ENCODE measurements at regions of chr11 and their contacts with region 1.

Region 1: GRCh38 chr11:117010808-117011540 is 87.3 kb downstream of the SIK3 start:
- DNase-seq: no peak
- H3K4me3 Mint-ChIP-seq: no peak overlapping the region
- H3K27ac Mint-ChIP-seq: peak overlapping the region; percentile 78
- H3K4me1 Mint-ChIP-seq: peaks cover 38% of the 10 kb centered on the region
- H3K27me3 Mint-ChIP-seq: no peaks in the 10 kb centered on the region

Region 2: DNA sequence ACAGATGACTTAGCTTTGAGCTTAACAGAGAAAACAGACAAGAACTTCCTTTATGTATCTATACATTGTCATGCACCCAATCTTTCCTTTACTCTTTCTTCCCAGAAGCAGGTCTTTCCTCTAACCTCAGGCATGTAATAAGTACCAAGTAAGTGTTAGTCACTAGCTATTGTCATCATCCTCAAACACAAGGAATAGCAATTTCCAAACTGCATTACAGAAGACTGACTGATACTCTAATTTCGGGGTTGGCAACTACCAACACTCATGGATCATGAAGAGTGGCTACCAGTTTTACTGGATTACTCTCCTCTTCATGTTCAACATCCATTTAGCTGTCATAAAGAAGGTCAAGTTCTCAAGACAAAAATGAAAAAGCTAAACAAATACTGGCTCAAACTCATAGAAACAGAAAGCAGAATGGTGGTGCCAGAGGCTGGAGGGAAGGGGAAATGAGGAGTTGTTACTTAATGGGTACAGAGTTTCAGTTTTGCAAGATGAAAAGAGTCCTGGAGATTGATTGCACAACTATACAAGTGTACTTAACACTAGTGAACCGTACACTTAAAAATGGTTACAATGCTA is 24.4 kb before region 1 on chr11:
- intact Hi-C with region 1: loop called (anchors 1 kb)
- DNase-seq: no peak
- H3K4me3 Mint-ChIP-seq: peak overlapping the region; percentile 65
- H3K27ac Mint-ChIP-seq: peak overlapping the region; percentile 73
- H3K4me1 Mint-ChIP-seq: peaks cover 70% of the 10 kb centered on the region
- H3K27me3 Mint-ChIP-seq: no peaks in the 10 kb centered on the region

Region 3: DNA sequence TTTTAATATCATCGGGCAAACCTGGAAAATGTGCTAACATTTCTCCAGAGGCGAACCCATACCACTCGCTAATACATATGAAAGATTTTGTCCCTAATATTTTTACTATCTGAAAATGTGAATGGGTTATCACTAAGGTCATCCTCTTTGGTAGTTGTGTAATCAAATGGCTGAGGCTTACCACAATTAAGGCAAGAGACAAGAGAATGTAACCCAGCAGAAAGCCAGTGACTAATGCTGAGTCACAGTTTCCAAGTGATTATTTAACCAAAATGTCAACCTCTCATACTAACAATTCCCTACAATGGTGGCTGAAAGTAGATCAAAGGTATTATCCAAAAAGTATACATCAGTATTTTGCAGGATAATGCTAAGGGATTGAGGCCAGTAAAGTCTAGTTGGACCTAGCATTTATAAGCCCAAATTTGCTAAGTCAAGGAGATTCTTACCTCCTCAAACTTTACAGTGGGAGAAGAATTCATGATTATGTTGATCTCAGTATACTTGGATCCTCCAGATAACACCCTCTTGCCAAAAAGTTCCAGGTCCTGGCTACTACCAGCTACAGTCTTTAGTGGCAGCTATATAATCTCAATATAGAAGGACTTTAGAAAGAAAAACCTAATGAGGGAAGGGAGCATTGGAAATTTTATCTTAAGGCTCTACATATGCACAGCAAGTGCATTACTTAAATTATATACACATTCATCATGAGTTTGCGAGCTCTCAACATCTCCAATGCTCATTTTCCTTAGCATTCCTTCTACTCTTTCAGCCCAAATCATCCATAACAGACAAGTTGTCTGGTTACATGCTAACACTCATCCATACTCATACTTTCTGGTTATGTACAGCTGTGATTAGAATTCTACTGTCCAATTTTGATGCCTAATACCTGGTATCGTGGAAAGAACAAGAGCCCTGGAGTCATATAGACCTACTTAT is 61.8 kb after region 1 on chr11:
- intact Hi-C with region 1: loop called (anchors 1 kb)
- DNase-seq: no peak
- H3K4me3 Mint-ChIP-seq: peak overlapping the region; percentile 19
- H3K27ac Mint-ChIP-seq: peak overlapping the region; percentile 53
- H3K4me1 Mint-ChIP-seq: peaks cover 58% of the 10 kb centered on the region
- H3K27me3 Mint-ChIP-seq: no peaks in the 10 kb centered on the region

Region 4: GRCh38 chr11:117092951-117093590 is 82.1 kb after region 1 on chr11:
- intact Hi-C with region 1: loop called (anchors 1 kb)
- DNase-seq: no peak
- H3K4me3 Mint-ChIP-seq: peak overlapping the region; percentile 53
- H3K27ac Mint-ChIP-seq: peak overlapping the region; percentile 81
- H3K4me1 Mint-ChIP-seq: peaks cover 77% of the 10 kb centered on the region
- H3K27me3 Mint-ChIP-seq: no peaks in the 10 kb centered on the region

Region 5: DNA sequence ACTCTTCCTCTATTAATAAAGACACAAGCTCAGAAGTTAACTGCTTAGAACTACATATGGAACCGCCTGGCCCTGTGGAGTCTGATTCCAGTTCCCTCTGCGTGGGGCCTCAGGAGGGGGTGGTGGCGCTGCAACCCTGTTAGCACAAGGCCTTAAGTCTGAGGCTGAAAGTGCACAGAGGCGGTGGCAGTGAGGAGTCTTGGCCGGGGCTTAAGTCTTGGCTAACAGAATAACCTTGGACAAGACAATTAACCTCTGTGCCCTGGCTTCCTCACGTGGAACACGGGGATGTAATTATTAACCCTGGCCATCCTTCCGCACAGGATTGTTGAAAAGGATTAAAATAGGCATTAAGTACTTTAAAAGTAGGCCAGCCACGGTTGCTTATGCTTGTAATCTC is 508.2 kb after region 1 on chr11:
- intact Hi-C with region 1: no loop called
- DNase-seq: no peak
- H3K4me3 Mint-ChIP-seq: no peak overlapping the region
- H3K27ac Mint-ChIP-seq: no peak overlapping the region
- H3K4me1 Mint-ChIP-seq: no peaks in the 10 kb centered on the region
- H3K27me3 Mint-ChIP-seq: peaks cover 2% of the 10 kb centered on the region

Measured in activated T-helper 1 cell treated with anti-CD3 and anti-CD28 coated beads, Interleukin-12 subunit alpha, Interleukin-12 subunit beta, Interleukin-2, Interleukin-4 antibody, amounts not matched to agents 30 ng/mL and 10 ng/mL and 1 ng/mL, durations not matched to agents 14 hours and 24 hours and 36 hours (primary cell).